HCT116 (cell line): ENCODE measurements at regions of chr11 and their contacts with region 1.

Region 1: GRCh38 chr11:33687733-33688479 is 12.7 kb downstream of the C11orf91 start:
- DNase-seq: peak; percentile 60
- ATAC-seq: peak; percentile 43
- H3K4me3 ChIP-seq: no peak overlapping the region
- H3K27ac ChIP-seq: no peak overlapping the region
- H3K4me1 ChIP-seq: peaks cover 29 to 56% of the 10 kb centered on the region in 2 experiments
- H3K27me3 ChIP-seq: no peaks in the 10 kb centered on the region
- CTCF ChIP-seq: peak; percentile 70 to 90 (median 88); a peak in 5 of 6 replicates
- POLR2A ChIP-seq: no peak
- RAD21 ChIP-seq: peak; percentile 98

Region 2: DNA sequence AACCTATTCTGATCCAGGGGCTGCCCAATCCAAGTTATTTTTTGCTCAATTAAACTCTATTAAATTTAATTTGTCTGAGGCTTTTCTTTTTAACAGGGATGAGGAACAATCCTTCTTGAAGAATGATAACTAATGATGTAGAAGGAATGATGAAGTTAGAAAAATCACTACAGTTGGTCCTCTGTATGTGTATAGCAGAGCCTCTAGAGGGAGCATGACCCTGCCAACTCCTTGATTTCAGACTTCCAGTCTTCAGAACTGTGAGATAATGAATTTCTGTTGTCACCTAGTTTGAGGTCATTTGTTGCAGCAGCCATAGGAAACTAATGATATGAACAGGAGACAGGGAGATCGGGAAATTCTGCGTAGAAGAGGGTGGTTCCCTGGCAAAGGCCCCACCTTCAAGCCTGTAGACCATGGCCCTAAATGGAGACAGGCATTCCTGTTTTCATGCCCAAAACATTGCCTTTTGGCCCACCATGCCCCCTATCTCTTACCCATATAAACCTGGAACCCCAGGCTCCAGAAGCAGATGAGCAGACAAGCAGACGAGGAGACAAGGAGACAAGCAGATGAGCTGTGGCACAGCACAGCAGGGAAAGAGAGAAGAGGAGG is 803.0 kb before region 1 on chr11:
- CTCF ChIA-PET with region 1: no interaction called
- POLR2A ChIA-PET with region 1: no interaction called
- RAD21 ChIA-PET with region 1: no interaction called
- intact Hi-C with region 1: loop called (anchors 10 kb)
- DNase-seq: no peak
- ATAC-seq: peak; percentile 84
- H3K4me3 ChIP-seq: no peak overlapping the region
- H3K27ac ChIP-seq: no peak overlapping the region
- H3K4me1 ChIP-seq: peaks cover 0 to 3% of the 10 kb centered on the region in 2 experiments; a peak in 1 of 4 replicates
- H3K27me3 ChIP-seq: no peaks in the 10 kb centered on the region
- CTCF ChIP-seq: peak; percentile 34 to 67 (median 62); a peak in 5 of 6 replicates
- POLR2A ChIP-seq: no peak
- RAD21 ChIP-seq: peak; percentile 49; the same call in 1 of the 2 replicates

Region 3: DNA sequence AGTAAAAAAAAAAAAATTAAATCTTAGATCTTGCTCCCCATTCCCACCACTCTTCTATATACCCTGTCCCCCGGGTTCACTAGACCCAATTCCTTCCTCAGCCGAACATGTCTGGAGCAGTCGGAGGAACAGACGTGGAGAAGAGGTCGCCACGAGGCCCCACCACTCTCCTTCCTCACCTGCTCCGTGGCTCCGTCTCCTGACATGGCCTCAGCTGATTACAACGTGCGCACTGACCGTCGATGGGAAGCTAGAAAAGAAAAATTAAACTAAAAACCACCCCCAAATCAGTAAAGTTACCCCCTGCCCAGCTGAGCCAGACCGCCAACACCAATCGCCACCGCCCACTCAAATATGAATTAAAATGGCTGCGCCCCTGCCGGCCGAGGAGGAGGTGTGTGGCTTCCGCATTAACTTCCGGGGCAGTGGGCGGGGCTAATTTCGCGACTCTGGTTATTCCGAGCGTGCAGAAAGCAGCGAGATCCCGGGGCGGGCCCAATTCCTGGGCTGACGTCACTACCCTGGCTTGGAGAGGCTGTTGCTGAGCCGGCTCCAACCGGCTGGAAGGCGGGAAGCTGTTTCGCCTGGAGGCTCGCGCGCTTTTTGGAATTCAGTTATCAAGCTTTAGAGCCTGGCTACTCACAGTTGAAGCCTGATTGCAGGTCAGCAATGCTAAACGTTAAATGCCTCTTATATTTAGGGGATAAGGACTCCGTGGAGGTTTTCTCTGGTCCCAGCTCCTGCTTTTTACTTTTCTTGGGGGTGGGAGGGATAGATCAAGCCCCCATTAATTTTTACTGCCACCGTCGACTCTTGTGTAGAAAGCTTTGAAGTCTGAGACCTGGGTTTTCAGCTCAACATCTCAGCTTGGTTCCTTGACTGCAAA is 526.5 kb before region 1 on chr11 and contains the start of gene CSTF3:
- CTCF ChIA-PET with region 1: interaction called, 4 read pairs
- POLR2A ChIA-PET with region 1: no interaction called
- RAD21 ChIA-PET with region 1: no interaction called
- intact Hi-C with region 1: loop called (anchors 1 kb)
- DNase-seq: peak; percentile 97
- ATAC-seq: peak; percentile 97
- H3K4me3 ChIP-seq: peak within 1 kb of the TSS; percentile 70 to 85
- H3K27ac ChIP-seq: peak within 1 kb of the TSS; percentile 76
- H3K4me1 ChIP-seq: peaks cover 6 to 27% of the 10 kb centered on the region in 2 experiments; a peak in 3 of 4 replicates
- H3K27me3 ChIP-seq: no peaks in the 10 kb centered on the region
- CTCF ChIP-seq: peak in 2 of 3 experiments; percentile 11 to 20; a peak in 1 of 6 replicates
- POLR2A ChIP-seq: peak; percentile 45
- RAD21 ChIP-seq: no peak
- total RNA-seq, gene CSTF3: 39.3 TPM

Region 4: DNA sequence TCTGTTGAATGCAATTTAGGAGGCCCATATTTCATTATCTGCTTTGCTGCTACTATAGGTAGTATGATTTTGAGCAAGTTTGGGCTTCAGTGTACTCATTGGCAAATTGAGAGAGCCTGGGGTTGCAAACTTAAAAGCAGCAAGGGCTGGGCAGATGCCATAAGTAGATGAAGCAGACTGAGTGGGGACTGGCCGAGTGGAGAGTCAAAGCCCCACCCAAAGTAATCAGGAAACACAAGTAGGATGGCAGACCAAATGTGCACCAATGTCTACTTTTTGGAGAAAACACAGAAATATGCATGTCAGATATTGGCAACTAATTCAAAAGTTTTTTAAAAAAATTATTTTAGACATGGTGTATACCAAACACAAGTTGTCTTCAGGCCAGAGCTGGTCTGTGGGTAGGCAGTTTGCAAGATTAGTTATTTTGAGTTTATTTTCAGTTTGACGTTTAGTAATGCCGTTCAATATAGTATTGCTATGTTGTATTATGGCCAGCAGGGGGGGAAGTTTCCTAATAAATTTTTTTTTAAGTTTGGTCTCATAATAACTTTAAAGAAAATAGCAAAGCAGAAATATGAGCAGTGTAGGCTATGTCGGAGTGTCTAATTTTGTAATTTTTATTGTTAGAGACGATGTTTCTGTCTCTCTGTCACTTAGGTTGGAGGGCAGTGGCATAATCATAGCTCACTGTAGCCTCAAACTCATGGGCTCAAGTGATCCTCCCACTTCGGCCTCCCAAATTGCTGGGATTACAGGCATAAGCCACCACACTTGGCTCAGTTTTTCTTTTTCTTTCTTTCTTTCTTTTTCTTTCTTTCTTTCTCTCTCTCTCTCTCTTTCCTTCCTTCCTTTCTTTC is 325.6 kb before region 1 on chr11:
- CTCF ChIA-PET with region 1: interaction called, 13 read pairs
- POLR2A ChIA-PET with region 1: interaction called, 3 read pairs
- RAD21 ChIA-PET with region 1: interaction called in 1 of 2 experiments, 3 read pairs
- intact Hi-C with region 1: loop called (anchors 1 kb)
- DNase-seq: peak; percentile 32
- ATAC-seq: peak; percentile 70
- H3K4me3 ChIP-seq: no peak overlapping the region
- H3K27ac ChIP-seq: no peak overlapping the region
- H3K4me1 ChIP-seq: no peaks in the 10 kb centered on the region
- H3K27me3 ChIP-seq: no peaks in the 10 kb centered on the region
- CTCF ChIP-seq: peak; percentile 42 to 85 (median 72)
- POLR2A ChIP-seq: no peak
- RAD21 ChIP-seq: peak; percentile 79

Region 5: DNA sequence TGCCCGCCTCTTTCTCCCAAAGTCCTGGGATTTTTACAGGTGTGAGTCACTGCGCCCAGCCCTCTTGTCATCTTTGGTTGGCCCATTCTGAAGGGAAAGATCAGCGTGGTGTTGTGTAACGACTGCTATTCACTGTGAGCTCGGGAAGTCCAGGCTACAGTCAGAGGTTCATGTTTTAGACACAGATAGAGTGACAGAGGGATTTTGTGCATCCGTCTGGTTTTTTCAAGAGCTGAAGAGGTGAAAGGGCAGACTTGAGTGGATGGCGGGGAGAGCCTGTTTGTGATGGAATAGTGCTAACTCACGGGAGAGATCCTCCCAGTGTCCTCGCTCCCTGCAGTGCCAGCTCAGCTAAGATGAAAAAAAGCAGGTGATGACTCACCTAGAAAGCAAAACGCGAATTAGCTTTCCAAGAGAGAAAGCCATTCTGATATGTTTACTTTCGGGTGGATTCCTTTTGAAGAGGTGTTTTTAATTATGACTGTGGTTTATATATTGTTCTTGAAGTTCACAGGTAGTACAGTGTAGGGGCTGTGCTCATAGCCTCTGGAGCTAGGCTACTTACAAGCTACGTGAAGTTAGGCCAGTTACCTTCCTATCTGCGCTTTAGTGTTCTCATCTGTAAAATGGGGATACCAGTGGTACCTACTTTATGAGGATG is 54.5 kb before region 1 on chr11:
- CTCF ChIA-PET with region 1: interaction called, 3 read pairs
- POLR2A ChIA-PET with region 1: interaction called, 5 read pairs
- RAD21 ChIA-PET with region 1: interaction called in 1 of 2 experiments, 5 read pairs
- intact Hi-C with region 1: loop called (anchors 5 kb)
- DNase-seq: peak; percentile 98
- ATAC-seq: peak; percentile 81
- H3K4me3 ChIP-seq: peak overlapping the region in 1 of 2 experiments; percentile 46; a peak in 2 of 4 replicates
- H3K27ac ChIP-seq: peak overlapping the region; percentile 55; the same call in 1 of the 2 replicates
- H3K4me1 ChIP-seq: peaks cover 27 to 70% of the 10 kb centered on the region in 2 experiments
- H3K27me3 ChIP-seq: no peaks in the 10 kb centered on the region
- CTCF ChIP-seq: no peak
- POLR2A ChIP-seq: no peak
- RAD21 ChIP-seq: peak; percentile 23; the same call in 1 of the 2 replicates